BJ (cell line): ENCODE measurements at regions of chr18 and their contacts with region 1.

Region 1: DNA sequence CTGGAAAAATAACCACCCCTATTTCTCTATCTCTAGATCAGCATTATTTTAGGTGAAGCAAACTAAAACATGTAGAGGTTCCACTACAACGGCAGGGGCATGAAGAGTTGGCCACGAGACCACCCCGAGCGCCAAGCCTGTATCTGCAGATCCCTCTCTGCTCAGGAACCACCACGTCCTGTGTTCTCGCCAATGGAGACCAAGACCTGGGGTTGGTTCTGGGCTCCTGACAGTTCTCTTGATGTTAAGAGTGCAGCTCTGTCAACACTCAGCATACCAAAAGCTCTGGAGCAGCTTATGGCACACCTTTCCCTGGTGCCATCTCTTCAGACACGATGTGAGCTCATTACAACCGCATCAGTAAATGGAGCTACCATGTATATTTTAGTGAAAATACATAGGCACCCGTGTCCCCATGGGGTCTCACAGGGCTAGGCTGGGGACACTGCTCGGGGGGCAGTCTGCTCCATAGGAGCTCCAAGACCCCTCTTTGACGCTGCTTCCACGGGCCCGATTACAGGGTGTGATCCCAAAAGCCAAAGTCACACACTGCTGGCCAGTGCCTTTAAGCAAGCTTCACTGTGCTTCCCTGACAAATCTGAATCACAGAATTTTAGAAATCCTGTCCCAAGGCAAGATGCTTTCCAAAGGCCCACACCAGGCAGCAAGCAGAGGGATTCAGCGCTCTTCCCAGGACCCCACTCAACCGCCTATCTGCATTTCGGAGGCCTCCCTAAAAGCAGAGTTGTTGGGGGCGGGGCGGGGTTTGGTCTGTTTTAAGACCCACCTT is 72.2 kb downstream of the EMILIN2 start:
- DNase-seq: no peak
- H3K4me3 ChIP-seq: no peak overlapping the region
- H3K27me3 ChIP-seq: no peaks in the 10 kb centered on the region
- CTCF ChIP-seq: no peak

Region 2: GRCh38 chr18:2872095-2872494 is 46.9 kb before region 1 on chr18:
- CTCF ChIA-PET with region 1: no interaction called
- POLR2A ChIA-PET with region 1: interaction called, 12 read pairs
- DNase-seq: no peak
- H3K4me3 ChIP-seq: no peak overlapping the region
- H3K27me3 ChIP-seq: no peaks in the 10 kb centered on the region
- CTCF ChIP-seq: no peak

Region 3: GRCh38 chr18:2958819-2959298 is 39.9 kb after region 1 on chr18:
- CTCF ChIA-PET with region 1: no interaction called
- POLR2A ChIA-PET with region 1: no interaction called
- DNase-seq: no peak
- H3K4me3 ChIP-seq: no peak overlapping the region
- H3K27me3 ChIP-seq: no peaks in the 10 kb centered on the region
- CTCF ChIP-seq: no peak